Right ventricle myocardium superior (tissue), 1 donor: ENCODE measurements at regions of chr11 and their contacts with region 1.

Region 1: DNA sequence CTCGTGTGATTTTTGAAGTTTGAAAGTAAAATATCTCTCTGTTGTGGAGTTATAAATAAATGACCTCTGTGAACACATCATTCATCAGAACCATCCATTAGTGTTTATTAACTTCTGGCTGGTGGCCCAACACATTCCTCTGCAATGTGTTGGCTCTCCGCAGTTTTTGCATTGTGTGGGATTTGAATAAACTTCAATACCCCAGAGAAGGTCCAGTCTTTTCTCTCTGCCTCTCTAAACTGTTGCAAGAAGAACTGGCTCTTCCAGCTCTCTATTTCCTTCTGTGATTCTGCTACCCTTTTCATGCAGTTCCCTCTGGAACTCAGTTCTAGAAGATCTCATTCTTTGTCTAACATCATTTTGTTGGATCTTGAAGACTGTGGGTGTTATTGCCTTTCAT is 125.0 kb upstream of the ARHGAP42 start:
- DNase-seq: no peak
- ATAC-seq: peak; percentile 81

Region 2: DNA sequence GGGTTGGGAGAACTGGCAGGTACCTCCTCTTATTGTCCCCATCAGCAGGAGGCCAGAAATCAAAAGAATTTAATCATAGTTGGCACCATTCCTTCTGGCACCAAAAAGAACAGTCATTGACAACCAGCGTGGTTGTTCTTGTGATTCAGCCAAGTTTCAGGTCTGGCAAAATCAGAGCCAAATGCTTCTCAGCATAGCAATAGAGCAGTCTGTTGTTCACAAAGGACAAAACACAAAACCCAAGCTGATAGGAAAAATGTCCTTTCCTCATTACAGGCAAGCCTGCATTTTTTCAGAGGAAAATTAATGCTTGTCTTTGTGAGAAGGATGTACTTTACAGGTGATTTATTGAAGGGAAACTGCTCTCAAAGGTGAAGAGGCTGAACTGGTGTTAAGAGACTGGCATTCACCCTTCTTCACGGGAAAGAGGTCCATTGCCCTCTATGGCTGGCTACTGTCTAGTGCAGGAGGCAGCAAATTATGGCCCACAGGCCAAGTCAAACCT is 116.8 kb before region 1 on chr11:
- intact Hi-C with region 1: loop called (anchors 10 kb)
- DNase-seq: no peak
- ATAC-seq: peak; percentile 96